ENCODE measurements at regions of chr15 and their contacts with region 1.

Region 1: DNA sequence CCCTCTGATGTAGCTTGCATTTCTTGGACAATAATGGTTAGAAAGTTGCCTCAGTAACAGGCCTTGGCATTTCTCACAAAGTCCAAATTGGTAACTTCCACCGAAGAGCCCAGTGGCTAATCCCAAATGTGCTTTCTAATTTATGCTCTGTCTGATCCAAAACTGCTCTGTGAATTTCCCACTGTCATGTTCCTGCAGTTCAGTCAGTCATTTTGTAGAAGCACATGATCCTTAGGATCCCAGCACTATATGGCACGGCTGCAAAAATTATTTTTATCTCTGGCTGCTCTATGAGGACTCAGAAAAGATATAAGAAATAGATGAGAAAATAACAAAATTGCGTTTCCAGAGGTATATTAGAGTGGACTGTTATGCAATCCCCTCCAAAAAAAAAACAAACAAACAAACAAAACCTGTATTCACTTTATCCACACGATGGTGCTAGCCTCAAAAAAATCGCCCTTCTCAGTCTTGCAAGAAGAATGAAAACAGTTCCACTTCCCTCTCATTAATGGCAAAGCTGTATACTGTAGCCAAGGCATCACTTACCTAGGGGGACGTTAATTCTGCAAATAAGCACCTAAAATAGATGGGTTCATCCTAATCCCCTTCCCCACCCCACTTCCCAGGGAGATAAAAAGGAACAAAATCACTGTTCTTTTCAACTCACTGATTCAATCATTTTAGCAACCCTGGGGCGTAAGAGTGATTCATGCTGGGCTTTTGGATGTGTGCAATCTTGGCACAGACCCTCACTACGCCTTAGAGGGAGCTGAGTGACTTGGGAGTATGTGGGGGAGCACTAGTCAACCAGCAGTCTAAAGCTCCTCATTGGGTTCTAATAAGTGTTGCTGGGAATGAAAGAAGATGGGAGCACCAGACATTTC is 61.3 kb downstream of the TMCO5A start:
- DNase-seq: no peak
- ATAC-seq: peak; percentile 92

Region 2: DNA sequence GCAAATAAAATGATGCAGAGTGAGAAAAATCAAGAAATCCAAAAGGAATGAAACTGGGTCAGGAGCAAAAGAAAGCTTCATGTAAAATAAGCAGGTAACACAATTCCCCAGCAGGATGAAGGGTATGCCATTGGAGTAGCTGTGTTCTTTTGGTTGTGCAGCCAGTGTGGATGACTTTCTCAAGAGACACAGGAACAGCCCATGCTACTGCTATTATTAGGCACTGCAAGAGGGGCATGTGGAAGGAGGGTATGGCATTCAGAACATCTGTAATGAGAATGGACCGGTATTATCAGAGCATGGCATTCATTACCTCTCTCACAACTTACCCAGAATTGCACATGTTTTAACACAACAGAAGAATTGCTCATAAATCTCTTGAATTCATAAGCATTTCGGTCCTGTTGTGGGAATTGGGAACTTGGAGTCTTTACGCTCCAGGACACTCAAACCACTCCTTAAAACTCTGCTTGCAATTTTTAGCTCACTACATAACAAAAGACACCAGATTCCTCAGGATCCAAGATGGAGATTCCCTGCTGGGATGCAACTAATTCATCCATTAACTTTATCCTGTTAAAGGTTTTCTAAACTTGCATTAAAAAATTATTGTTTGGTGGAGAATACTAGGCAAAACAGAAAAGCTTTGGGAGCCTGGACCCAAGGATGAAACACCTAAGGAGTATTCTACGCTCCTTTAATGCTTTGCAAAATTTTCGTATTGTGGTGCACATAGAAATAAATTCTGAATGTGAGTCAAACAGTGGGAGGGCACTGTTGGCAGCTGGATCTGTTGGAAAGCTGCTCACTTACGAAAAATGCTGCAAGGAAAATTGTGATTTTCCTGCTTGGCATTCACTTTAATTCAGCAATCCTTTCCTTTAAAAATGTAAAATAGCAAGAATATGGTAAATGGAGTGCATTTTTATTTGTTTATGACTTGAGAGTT is 1450.9 kb before region 1 on chr15:
- intact Hi-C with region 1: loop called (anchors 5 kb)
- DNase-seq: no peak
- ATAC-seq: no peak

Region 3: GRCh38 chr15:37574985-37575384 is 420.7 kb before region 1 on chr15:
- intact Hi-C with region 1: no loop called
- DNase-seq: no peak
- ATAC-seq: no peak

Region 4: GRCh38 chr15:38354315-38354929 is 358.7 kb after region 1 on chr15:
- intact Hi-C with region 1: loop called (anchors 10 kb)
- DNase-seq: peak; percentile 70
- ATAC-seq: peak; percentile 80

Measured in sciatic nerve (tissue), 2 donors.